Mammary epithelial cell (primary cell): ENCODE measurements at regions of chr2 and their contacts with region 1.

Region 1: GRCh38 chr2:105521205-105521604 is 122.4 kb upstream of the FHL2 start:
- DNase-seq: no peak
- H3K4me3 ChIP-seq: no peak overlapping the region
- H3K27ac ChIP-seq: peak overlapping the region; percentile 6
- H3K4me1 ChIP-seq: peaks cover 7% of the 10 kb centered on the region
- H3K27me3 ChIP-seq: no peaks in the 10 kb centered on the region
- CTCF ChIP-seq: peak; percentile 31 to 47

Region 2: DNA sequence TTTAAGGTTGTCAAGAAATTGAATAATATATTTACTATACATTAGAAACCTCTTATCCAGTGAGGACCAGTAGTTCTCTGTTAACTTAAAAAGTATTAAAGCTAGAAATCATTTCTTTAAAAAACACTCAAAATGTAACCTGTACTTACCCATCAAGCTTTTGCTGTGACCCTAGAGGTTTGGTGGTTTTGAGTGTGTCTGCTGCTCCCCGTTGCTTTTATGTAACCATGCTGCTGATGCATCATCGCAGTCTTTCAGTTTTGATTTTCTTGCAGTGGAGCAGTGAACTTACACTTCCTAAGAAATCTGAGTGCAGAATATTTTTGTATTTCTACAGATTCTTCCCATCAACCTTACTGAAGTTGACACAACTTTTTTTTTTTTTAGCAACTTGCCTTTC is 449.2 kb before region 1 on chr2:
- CTCF ChIA-PET with region 1: no interaction called
- dilution Hi-C with region 1: no loop called
- in situ Hi-C with region 1: no loop called
- intact Hi-C with region 1: no loop called
- DNase-seq: no peak
- H3K4me3 ChIP-seq: no peak overlapping the region
- H3K27ac ChIP-seq: no peak overlapping the region
- H3K4me1 ChIP-seq: no peaks in the 10 kb centered on the region
- H3K27me3 ChIP-seq: no peaks in the 10 kb centered on the region
- CTCF ChIP-seq: no peak

Region 3: GRCh38 chr2:105114551-105114950 is 406.7 kb before region 1 on chr2:
- CTCF ChIA-PET with region 1: no interaction called
- dilution Hi-C with region 1: no loop called
- in situ Hi-C with region 1: loop called in 1 of 2 experiments (anchors 25 kb)
- intact Hi-C with region 1: loop called (anchors 5 kb)
- DNase-seq: peak; percentile 14
- H3K4me3 ChIP-seq: no peak overlapping the region
- H3K27ac ChIP-seq: no peak overlapping the region
- H3K4me1 ChIP-seq: no peaks in the 10 kb centered on the region
- H3K27me3 ChIP-seq: no peaks in the 10 kb centered on the region
- CTCF ChIP-seq: peak; percentile 64 to 73

Region 4: DNA sequence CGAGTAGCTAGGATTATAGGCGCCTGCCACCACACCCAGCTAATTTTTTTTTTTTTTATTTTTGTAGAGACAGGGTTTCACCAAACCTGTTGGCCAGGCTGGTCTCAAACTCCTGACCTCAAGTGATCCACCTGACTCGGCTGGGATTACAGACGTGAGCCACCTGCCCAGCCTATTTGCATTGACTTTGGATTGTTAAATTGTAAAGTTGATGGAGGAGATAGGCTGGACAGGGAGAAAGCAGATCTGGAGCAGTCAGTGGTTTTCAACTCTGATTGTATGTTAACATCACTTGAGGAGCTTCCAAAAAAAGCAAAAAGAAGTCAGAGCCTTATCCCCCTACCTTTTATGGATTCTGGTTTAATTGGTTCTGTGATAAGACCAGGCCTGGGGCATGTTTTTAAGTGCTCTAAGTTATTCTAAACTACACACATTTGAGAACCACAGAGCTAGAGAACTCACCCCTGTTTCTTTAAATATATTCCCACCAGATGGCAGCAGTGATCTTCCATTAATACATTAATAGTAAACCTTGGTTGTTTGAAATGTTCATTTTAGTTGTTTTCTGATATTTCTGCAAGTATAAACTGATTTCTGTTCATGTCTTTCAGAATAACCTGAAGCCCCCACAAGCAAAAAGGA is 176.4 kb before region 1 on chr2:
- CTCF ChIA-PET with region 1: interaction called, 4 read pairs
- dilution Hi-C with region 1: no loop called
- in situ Hi-C with region 1: no loop called
- intact Hi-C with region 1: loop called (anchors 1 kb)
- DNase-seq: no peak
- H3K4me3 ChIP-seq: no peak overlapping the region
- H3K27ac ChIP-seq: no peak overlapping the region
- H3K4me1 ChIP-seq: no peaks in the 10 kb centered on the region
- H3K27me3 ChIP-seq: no peaks in the 10 kb centered on the region
- CTCF ChIP-seq: peak; percentile 33 to 43

Region 5: DNA sequence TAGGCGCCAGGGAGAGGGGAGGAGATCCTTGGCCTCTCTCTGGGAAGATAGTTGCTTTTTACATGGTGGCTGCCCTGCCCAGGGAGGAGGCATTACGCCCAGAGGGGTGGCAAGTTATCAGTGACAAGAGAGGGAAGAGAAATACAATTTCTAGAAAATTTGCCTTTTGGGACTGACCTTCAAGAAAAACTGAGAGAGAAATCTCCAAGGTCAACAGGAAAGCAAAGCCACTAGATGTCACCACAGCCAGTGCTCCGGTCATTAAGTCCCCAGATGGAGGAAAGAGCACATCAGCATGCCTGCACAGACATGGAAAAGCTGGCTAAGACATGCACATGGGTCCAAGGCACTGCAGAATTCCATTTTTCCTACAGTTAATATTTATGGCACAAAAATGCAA is 143.4 kb before region 1 on chr2:
- CTCF ChIA-PET with region 1: interaction called, 4 read pairs
- dilution Hi-C with region 1: loop called (anchors 5 kb)
- in situ Hi-C with region 1: loop called in 1 of 2 experiments (anchors 5 kb)
- intact Hi-C with region 1: no loop called
- DNase-seq: no peak
- H3K4me3 ChIP-seq: no peak overlapping the region
- H3K27ac ChIP-seq: no peak overlapping the region
- H3K4me1 ChIP-seq: peaks cover 88% of the 10 kb centered on the region
- H3K27me3 ChIP-seq: no peaks in the 10 kb centered on the region
- CTCF ChIP-seq: no peak

Region 6: DNA sequence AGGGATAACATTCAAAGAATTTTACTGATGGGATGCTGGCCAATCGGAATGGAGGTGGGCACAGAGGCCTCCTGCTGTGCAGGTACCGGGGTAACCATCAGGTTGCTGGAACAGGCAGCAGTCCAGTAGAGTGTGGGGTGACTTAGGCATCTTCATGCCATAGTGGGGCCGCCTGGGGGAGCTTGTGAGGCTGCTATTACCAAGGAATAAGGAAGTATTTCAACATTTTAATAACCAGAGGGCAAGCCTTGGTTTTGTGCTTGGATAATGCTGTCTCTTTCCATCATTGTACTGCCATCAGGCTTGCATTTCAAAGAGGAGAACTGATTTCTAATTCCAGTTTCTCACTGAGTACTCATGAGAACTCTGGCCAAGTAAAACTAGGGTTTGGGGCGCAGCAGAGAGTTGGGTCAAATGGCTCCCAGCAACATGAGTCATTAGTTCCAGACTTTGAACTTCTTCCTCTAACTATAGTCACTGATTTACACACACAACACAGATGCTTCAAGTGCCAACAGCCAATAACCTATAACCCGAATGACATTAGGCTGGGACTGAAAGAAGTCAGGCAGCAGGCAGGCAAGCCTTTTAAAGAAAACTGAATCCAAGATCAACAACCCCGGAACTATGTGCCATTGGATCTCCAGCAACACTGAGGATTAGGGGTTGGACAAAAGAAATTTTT is 66.3 kb before region 1 on chr2:
- CTCF ChIA-PET with region 1: no interaction called
- dilution Hi-C with region 1: no loop called
- in situ Hi-C with region 1: loop called in 1 of 2 experiments (anchors 10 kb)
- intact Hi-C with region 1: loop called (anchors 1 kb)
- DNase-seq: peak; percentile 89
- H3K4me3 ChIP-seq: no peak overlapping the region
- H3K27ac ChIP-seq: peak overlapping the region; percentile 97
- H3K4me1 ChIP-seq: peaks cover 24% of the 10 kb centered on the region
- H3K27me3 ChIP-seq: no peaks in the 10 kb centered on the region
- CTCF ChIP-seq: peak; percentile 54 to 71

Region 7: GRCh38 chr2:105545730-105546627 is 24.8 kb after region 1 on chr2:
- CTCF ChIA-PET with region 1: no interaction called
- dilution Hi-C with region 1: no loop called
- in situ Hi-C with region 1: no loop called
- intact Hi-C with region 1: loop called (anchors 1 kb)
- DNase-seq: peak; percentile 44
- H3K4me3 ChIP-seq: no peak overlapping the region
- H3K27ac ChIP-seq: no peak overlapping the region
- H3K4me1 ChIP-seq: peaks cover 11% of the 10 kb centered on the region
- H3K27me3 ChIP-seq: no peaks in the 10 kb centered on the region
- CTCF ChIP-seq: peak; percentile 87 to 89

Region 8: DNA sequence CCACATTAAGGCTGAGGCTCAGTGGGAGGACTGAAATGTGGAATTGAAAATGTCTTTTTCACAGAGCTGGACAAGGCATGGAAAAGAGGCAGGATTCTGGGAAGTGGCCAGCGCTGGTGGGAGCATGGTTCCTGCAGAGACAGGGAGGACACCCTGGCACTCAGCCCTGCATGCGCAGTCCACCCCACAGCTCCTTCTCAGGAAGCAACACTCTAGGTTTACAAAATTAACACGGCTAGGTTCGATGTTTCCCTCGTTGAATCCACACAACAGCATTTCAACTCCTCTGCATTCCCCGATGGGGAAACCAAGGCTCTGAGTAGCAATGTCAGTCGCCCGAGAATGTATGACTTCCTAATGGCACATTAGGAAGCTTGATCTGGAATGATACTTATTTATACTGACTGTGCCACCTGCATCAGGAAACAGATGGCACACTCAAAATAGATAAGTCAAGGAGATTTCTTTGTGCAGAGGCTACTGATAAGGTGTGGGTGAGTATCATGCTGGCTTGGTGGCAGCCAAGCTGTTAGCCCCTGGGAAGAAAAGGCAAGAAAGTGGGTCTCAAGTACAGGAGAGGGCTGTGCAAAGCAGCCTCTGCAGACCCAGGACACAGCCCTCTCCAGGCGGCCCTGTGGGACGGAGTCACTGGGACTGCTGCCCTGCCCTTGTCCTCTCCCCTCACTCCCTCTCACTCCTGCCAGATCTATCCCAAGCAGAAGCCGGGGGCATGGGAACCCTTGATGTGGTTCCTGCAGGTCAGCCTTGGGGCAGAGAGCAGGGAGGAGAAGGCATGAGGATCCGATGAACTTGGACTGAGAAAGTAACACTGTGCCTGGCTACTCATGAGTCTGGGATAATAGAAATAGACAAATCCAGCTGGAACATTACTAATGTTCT is 36.1 kb after region 1 on chr2:
- CTCF ChIA-PET with region 1: no interaction called
- dilution Hi-C with region 1: no loop called
- in situ Hi-C with region 1: no loop called
- intact Hi-C with region 1: no loop called
- DNase-seq: peak; percentile 27
- H3K4me3 ChIP-seq: no peak overlapping the region
- H3K27ac ChIP-seq: no peak overlapping the region
- H3K4me1 ChIP-seq: peaks cover 26% of the 10 kb centered on the region
- H3K27me3 ChIP-seq: peaks cover 2% of the 10 kb centered on the region
- CTCF ChIP-seq: no peak